Activated CD4-positive, alpha-beta T cell treated with anti-CD3 and anti-CD28 coated beads for 36 hours (primary cell): ENCODE measurements at regions of chr13 and their contacts with region 1.

Region 1: GRCh38 chr13:110819203-110820014 is 95.5 kb downstream of the ANKRD10 start:
- DNase-seq: peak; percentile 89
- ATAC-seq: peak; percentile 89
- H3K4me3 Mint-ChIP-seq: no peak overlapping the region
- H3K27ac Mint-ChIP-seq: no peak overlapping the region
- H3K4me1 Mint-ChIP-seq: peaks cover 5% of the 10 kb centered on the region
- H3K27me3 Mint-ChIP-seq: peaks cover 3% of the 10 kb centered on the region

Region 2: DNA sequence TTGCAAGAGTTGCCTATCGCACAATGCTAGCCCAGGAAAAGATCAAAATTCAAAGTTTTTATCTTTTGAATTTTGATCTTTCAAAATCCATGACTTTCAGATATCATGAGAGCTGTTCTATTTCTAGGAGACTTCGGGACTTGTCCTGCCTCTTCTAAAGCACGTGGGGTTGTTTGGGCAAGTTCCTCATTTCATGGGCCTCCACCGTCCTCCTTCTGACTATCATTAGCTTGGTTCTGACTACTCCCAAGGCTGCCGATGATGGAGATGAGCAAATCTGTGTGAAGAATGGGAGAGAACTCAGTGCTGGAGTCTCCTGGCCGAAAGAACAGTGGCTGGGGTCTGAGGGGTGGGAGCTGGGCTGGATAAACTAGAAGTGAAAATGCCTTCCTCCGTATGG is 598.9 kb before region 1 on chr13:
- CTCF ChIA-PET with region 1: no interaction called
- POLR2A ChIA-PET with region 1: no interaction called
- intact Hi-C with region 1: loop called in 1 of 2 experiments (anchors 5 kb)
- DNase-seq: no peak
- ATAC-seq: no peak
- H3K4me3 Mint-ChIP-seq: no peak overlapping the region
- H3K27ac Mint-ChIP-seq: no peak overlapping the region
- H3K4me1 Mint-ChIP-seq: no peaks in the 10 kb centered on the region
- H3K27me3 Mint-ChIP-seq: peaks cover 32% of the 10 kb centered on the region

Region 3: GRCh38 chr13:110455941-110456340 is 363.5 kb before region 1 on chr13:
- CTCF ChIA-PET with region 1: interaction called, 5 read pairs
- POLR2A ChIA-PET with region 1: no interaction called
- intact Hi-C with region 1: loop called (anchors 1 kb)
- DNase-seq: peak; percentile 83
- ATAC-seq: peak; percentile 99
- H3K4me3 Mint-ChIP-seq: no peak overlapping the region
- H3K27ac Mint-ChIP-seq: no peak overlapping the region
- H3K4me1 Mint-ChIP-seq: peaks cover 3% of the 10 kb centered on the region
- H3K27me3 Mint-ChIP-seq: peaks cover 18% of the 10 kb centered on the region

Region 4: DNA sequence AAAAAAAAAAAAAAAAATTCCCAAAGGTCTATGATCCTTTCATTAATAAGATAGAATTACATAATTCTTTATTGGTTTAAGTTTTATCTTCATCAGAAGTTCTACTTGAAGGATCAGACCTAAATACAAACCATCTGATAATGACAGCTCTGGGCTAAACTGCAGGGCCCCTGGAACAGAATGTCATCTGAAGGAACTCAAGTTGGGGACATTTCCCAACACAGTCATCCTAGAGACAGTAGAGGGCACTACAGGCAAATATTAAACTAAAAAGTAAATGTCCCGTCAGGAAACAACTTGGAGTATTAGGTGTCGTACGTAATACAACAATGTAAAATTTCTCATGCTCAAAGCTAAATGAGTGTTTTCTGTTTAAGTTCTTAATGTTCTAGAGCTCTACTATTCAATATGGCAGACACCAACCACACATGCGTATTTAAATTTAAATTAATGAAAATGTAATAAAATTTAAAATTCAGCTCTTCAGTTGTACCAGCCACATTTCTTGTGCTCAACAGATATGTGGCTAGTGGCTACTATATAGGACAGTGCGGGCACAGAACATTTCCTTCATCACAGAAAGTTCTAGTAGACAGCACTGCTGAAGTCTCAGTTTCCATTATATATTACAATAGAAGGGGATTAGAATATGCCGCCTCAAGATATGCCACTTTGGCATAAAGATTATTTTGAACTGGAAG is 225.8 kb before region 1 on chr13:
- CTCF ChIA-PET with region 1: interaction called, 14 read pairs
- POLR2A ChIA-PET with region 1: no interaction called
- intact Hi-C with region 1: loop called (anchors 1 kb)
- DNase-seq: peak; percentile 23
- ATAC-seq: peak; percentile 76
- H3K4me3 Mint-ChIP-seq: no peak overlapping the region
- H3K27ac Mint-ChIP-seq: no peak overlapping the region
- H3K4me1 Mint-ChIP-seq: no peaks in the 10 kb centered on the region
- H3K27me3 Mint-ChIP-seq: no peaks in the 10 kb centered on the region

Region 5: GRCh38 chr13:110683203-110683883 is 136.1 kb before region 1 on chr13:
- CTCF ChIA-PET with region 1: interaction called, 13 read pairs
- POLR2A ChIA-PET with region 1: no interaction called
- intact Hi-C with region 1: loop called (anchors 1 kb)
- DNase-seq: peak; percentile 34
- ATAC-seq: peak; percentile 71
- H3K4me3 Mint-ChIP-seq: no peak overlapping the region
- H3K27ac Mint-ChIP-seq: no peak overlapping the region
- H3K4me1 Mint-ChIP-seq: no peaks in the 10 kb centered on the region
- H3K27me3 Mint-ChIP-seq: no peaks in the 10 kb centered on the region

Region 6: GRCh38 chr13:110799246-110800236 is 19.9 kb before region 1 on chr13:
- CTCF ChIA-PET with region 1: interaction called, 10 read pairs
- POLR2A ChIA-PET with region 1: no interaction called
- intact Hi-C with region 1: no loop called
- DNase-seq: no peak
- ATAC-seq: no peak
- H3K4me3 Mint-ChIP-seq: peak overlapping the region; percentile 19
- H3K27ac Mint-ChIP-seq: no peak overlapping the region
- H3K4me1 Mint-ChIP-seq: peaks cover 8% of the 10 kb centered on the region
- H3K27me3 Mint-ChIP-seq: peaks cover 41% of the 10 kb centered on the region

Region 7: DNA sequence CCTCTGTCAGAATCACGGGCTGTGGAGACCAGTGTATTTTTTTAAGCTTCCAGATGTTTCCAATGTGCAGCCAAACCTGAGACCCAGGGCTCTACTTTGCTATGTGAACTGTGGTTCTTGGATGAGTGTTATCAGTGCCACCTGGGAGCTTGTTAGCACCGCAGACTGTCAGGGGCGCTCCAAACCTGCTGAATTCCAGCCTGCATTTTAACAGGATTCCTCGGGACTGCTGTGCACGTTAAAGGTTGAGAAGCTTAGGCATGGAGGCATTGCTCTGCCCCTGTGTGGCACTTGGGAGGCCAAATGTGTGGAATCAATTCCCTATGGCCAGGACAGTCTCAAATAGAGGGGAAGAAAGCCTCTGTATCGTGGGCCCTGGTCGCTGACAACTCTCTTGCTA is 15.2 kb after region 1 on chr13:
- CTCF ChIA-PET with region 1: no interaction called
- POLR2A ChIA-PET with region 1: no interaction called
- intact Hi-C with region 1: loop called in 1 of 2 experiments (anchors 1 kb)
- DNase-seq: no peak
- ATAC-seq: no peak
- H3K4me3 Mint-ChIP-seq: no peak overlapping the region
- H3K27ac Mint-ChIP-seq: no peak overlapping the region
- H3K4me1 Mint-ChIP-seq: no peaks in the 10 kb centered on the region
- H3K27me3 Mint-ChIP-seq: peaks cover 2% of the 10 kb centered on the region